Dendritic cell treated with granulocyte-macrophage colony-stimulating factor and Interleukin-4, amounts not matched to agents 40 ng/mL and 50 ng/mL, for 4 days (primary cell): ENCODE measurements at regions of chr2 and their contacts with region 1.

Region 1: DNA sequence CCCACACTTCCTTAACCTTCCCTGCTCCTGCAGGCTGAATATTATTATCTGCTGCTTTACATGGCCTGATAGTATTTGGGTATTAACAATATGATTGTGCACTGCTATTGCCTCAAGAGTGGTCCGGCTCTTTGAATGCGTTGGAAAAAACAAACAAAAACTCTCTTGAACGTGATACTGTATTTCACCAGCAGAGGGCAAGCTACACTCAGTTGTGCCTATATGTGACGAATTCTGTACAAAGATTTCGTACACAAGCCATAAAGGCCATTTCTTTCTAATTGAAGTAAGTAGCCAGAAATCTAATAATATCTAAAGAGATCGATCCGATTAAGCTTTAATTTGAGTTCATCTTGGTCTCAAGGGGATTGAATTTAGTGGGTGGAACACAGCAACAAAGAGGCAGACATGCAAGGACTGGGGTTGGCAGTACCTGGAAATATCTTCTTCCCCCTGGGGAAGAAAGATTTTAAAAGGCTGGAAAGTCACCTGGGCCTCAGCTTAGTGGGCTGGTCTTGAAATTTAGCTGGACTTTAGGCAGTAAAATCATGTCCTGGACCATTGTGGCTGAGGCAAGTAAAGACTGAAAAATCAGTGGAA is 49.3 kb upstream of the RAB6D start:
- H3K4me3 Mint-ChIP-seq: no peak overlapping the region
- H3K27ac Mint-ChIP-seq: no peak overlapping the region
- H3K4me1 Mint-ChIP-seq: no peaks in the 10 kb centered on the region
- H3K27me3 Mint-ChIP-seq: peaks cover 12% of the 10 kb centered on the region

Region 2: DNA sequence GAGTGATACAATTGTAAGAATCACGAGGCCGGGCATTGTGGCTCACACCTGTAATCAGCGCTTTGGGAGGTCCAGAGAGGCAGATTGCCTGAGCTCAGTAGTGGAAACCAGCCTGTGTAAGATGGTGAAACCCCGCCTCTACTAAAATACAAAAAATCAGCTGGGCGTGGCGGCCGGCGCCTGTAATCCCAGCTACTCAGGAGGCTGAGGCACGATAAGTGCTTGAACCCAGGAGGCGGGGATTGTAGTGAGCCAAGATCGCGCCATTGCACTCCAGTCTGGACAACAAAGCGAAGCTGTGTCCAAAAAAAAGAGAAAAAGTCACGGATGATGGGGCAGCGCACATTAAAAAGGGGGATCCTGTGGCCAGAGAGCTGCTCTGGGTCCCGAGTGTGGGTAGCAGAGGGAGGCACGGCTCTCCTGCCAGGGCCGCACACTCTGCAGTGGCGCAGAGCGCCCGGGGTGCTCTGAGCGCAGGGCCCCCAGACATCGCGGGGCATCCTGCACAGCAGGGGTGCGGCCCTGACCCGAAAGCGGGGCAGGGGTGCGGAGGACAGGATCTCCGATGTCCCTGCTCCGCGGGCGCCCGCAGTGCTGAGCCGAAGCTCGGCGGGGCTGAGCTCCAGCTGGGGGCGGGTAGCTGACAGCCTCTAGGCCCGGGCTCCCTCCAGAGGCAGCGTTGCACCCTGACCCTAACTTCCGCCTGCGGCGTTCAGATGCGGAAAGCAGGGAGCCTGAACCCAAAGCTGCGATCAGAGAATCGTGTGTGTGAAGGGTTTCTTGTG is 18.9 kb before region 1 on chr2:
- intact Hi-C with region 1: no loop called
- H3K4me3 Mint-ChIP-seq: peak overlapping the region; percentile 13
- H3K27ac Mint-ChIP-seq: no peak overlapping the region
- H3K4me1 Mint-ChIP-seq: no peaks in the 10 kb centered on the region
- H3K27me3 Mint-ChIP-seq: peaks cover 22% of the 10 kb centered on the region

Region 3: GRCh38 chr2:131801210-131801744 is 388.0 kb after region 1 on chr2:
- intact Hi-C with region 1: loop called (anchors 2 kb)
- H3K4me3 Mint-ChIP-seq: no peak overlapping the region
- H3K27ac Mint-ChIP-seq: no peak overlapping the region
- H3K4me1 Mint-ChIP-seq: no peaks in the 10 kb centered on the region
- H3K27me3 Mint-ChIP-seq: peaks cover 25% of the 10 kb centered on the region